ENCODE measurements at regions of chr11 and their contacts with region 1.

Region 1: GRCh38 chr11:93662177-93662575 is 694 bp downstream of the CEP295 start:
- DNase-seq: no peak
- ATAC-seq: no peak
- H3K4me3 Mint-ChIP-seq: peak overlapping the region; percentile 84
- H3K27ac Mint-ChIP-seq: peak overlapping the region; percentile 85
- H3K4me1 Mint-ChIP-seq: peaks cover 23% of the 10 kb centered on the region
- H3K27me3 Mint-ChIP-seq: no peaks in the 10 kb centered on the region
- CTCF ChIP-seq: no peak

Region 2: DNA sequence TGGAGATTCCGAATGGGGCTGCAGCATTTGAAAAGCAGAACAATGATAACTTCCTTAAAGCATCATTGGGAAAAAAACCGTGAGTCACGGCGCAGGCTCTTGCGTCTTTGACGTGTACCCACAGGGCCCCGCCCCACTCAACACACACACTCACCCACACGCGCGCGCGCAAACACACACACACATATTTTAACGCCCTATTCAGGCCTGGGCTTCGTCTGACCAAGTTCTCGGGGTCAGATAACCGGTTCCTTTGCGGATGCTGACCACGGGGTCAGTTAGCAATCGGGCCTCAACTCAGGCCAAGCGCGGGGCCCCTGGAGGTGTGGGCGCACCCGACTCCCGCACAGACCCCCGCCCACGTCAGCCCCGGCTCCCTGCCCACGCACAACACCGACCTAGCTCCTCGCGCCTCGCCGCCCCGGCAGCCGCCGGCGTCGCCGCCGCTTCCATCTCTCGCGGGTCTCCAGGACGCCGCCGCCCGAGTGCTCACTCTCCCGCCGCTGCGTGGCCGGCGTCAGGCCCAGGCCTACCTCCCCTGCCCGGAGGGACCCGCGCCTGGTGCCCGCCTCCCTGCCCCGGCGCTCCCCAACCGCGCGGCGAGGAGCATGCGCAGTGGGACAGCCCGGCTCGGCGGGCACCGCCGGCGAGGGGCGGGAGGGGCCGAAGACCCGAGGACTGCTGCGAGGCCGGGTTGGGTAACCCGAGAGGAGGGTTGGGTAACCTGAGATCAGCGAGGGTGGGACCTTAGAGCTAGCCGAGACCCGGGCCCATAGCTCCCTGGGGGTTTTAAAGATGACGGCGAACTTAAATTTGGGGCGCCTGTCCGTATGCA is 464.6 kb before region 1 on chr11 and contains the start of gene SLC36A4:
- CTCF ChIA-PET with region 1: no interaction called
- POLR2A ChIA-PET with region 1: interaction called, 4 read pairs
- intact Hi-C with region 1: loop called (anchors 1 kb)
- DNase-seq: peak; percentile 85
- ATAC-seq: peak; percentile 86
- H3K4me3 Mint-ChIP-seq: peak within 1 kb of the TSS; percentile 91
- H3K27ac Mint-ChIP-seq: peak within 1 kb of the TSS; percentile 93
- H3K4me1 Mint-ChIP-seq: peaks cover 15% of the 10 kb centered on the region
- H3K27me3 Mint-ChIP-seq: no peaks in the 10 kb centered on the region
- CTCF ChIP-seq: no peak
- total RNA-seq, gene SLC36A4: 14.9 and 17.0 TPM in 2 replicates

Region 3: DNA sequence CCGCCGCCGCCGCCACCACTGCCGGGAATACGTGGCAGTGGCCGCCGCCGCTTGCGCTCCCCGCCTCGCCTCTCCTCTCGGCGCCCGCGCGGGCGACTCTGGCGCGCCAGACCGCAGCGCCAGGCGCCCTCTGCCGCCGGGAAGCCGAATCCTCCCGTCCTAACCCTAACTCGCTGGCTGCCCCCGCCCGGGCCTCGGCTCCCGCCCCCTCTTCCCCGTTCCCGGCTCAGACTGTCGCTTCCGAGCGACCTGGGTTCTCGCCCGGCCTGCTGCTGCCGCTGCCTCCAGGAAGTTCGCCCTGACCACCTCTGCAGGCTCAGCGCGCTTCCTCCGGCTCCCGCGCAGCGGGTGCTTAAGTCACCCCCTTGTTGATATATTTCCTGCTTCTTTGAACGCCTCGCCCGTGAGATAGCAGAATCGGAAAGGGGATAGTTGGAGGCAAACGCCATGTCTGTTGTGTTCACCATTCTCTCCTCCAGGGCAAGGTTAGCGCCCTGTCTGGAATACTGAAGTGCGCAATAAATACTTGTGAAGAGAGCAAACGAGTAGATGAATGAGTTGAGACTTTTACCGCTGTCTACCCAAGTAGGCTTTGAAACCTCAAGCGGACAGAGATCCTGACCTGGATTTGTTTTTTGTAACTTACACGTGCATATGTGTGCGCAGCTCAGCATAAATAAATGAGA is 118.7 kb before region 1 on chr11 and contains the start of gene SMCO4:
- CTCF ChIA-PET with region 1: no interaction called
- POLR2A ChIA-PET with region 1: no interaction called
- intact Hi-C with region 1: loop called (anchors 5 kb)
- DNase-seq: peak; percentile 62
- ATAC-seq: peak; percentile 77
- H3K4me3 Mint-ChIP-seq: peak within 1 kb of the TSS; percentile 90
- H3K27ac Mint-ChIP-seq: peak within 1 kb of the TSS; percentile 56
- H3K4me1 Mint-ChIP-seq: peaks cover 13% of the 10 kb centered on the region
- H3K27me3 Mint-ChIP-seq: peaks cover 4% of the 10 kb centered on the region
- CTCF ChIP-seq: no peak
- total RNA-seq, gene SMCO4: 3.2 and 4.6 TPM in 2 replicates

Region 4: DNA sequence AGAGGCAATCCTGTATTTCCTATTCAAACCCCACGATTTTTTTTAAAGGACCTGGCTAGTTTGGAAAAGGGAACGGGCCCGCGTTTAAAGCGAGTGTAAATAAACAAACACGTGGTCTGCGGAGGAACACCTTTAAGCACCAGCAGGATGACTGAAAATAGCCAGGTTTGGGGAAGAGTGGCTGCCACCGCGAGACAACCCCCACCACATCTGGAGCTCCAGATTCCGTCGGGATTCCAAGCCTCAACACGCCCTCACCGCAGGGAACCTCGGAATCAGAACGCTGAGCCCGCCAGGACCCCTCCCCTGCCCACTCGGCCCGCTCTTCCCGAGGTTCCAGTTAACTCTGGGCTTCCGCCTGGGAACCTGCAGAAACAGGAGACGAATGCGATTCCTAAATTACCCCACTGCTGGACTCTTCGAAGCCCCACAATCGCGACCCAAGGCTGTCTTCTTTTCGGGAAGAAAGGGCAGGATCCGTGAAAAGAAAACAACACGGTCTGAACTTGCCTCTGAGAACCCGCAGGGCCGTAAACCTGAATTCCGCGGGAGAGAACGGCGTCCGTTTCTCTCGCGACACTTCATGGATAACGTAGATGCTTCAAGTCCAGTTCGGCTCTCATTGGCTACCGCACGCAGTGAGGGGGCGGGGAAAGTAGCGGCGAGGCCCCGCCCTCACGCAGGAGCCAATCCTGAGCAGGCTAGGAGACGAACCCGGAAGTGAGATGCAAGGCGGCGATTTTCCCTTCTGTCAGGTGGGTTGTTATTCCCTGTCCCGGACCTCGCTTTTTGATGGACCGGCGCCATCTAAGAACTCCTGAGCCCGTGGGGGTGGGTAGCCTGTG is 831.3 kb after region 1 on chr11 and contains the starts of genes ANKRD49 and MRE11:
- CTCF ChIA-PET with region 1: no interaction called
- POLR2A ChIA-PET with region 1: no interaction called
- intact Hi-C with region 1: loop called (anchors 1 kb)
- DNase-seq: peak; percentile 94
- ATAC-seq: peak; percentile 99
- H3K4me3 Mint-ChIP-seq: peak within 1 kb of the TSS; percentile 93
- H3K27ac Mint-ChIP-seq: peak within 1 kb of the TSS; percentile 92
- H3K4me1 Mint-ChIP-seq: peaks cover 39% of the 10 kb centered on the region
- H3K27me3 Mint-ChIP-seq: no peaks in the 10 kb centered on the region
- CTCF ChIP-seq: no peak
- total RNA-seq, gene ANKRD49: 39.5 and 46.5 TPM in 2 replicates
- total RNA-seq, gene MRE11: 39.7 and 40.1 TPM in 2 replicates